Sigmoid colon (tissue), 7 donors: ENCODE measurements at regions of chr12 and their contacts with region 1.

Region 1: GRCh38 chr12:10140001-10140400 is 10.0 kb upstream of the CLEC7A start:
- DNase-seq: no peak
- H3K4me3 ChIP-seq: no peak overlapping the region
- H3K27ac ChIP-seq: no peak overlapping the region
- H3K4me1 ChIP-seq: peaks cover 0 to 13% (median 5%) of the 10 kb centered on the region in 4 donors
- H3K27me3 ChIP-seq: no peaks in the 10 kb centered on the region
- CTCF ChIP-seq: peak in 3 of 4 experiments; percentile 29 to 31 (median 30)
- EP300 ChIP-seq: no peak
- POLR2A ChIP-seq: no peak

Region 2: DNA sequence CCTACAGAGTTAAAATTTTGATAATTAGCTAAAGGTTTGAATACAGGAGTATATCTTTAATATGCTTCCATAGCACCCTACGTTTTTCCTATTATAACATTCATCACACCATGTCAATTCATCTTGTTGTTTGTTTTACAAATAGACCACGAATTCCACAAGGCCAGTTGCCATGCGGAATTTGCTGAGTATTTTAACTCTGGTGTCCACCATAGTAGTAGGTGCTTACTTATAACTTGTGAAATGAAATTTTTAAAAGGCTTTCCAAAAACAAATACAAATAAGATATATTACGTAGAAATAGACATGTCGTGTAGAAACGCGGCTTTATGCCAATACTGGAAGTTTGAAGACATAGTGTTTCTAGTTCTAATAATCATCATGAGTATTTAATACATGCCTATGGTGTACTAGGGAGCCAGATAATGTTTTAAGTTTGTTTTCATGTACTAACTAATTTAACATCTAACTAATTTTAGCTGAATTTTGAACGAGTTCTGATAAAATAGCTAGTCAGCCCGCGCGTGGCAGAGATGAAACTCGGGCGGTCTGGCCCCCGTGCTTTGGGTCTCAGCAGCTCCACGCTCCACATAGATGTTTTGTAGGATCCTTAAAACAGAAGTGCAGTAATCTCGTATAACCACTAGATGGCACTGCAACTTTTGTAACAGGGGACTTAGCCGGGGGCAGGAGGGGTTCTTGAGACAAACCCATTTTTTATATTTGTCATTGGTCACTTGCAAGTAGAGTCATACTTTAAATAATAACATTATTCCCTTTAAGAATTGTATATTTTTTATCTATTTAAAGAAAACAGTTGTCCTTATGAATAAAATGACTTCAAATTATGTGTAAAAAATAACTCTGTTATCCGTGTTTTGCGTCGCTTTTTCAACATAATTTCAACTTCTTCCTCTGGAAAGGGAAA is 389.5 kb before region 1 on chr12:
- intact Hi-C with region 1: loop called (anchors 5 kb)
- DNase-seq: peak; percentile 69
- H3K4me3 ChIP-seq: peak overlapping the region in 1 of 4 donors; percentile 14
- H3K27ac ChIP-seq: no peak overlapping the region
- H3K4me1 ChIP-seq: peaks cover 0 to 9% (median 0%) of the 10 kb centered on the region in 4 donors
- H3K27me3 ChIP-seq: no peaks in the 10 kb centered on the region
- CTCF ChIP-seq: peak; percentile 21 to 85 (median 64)
- EP300 ChIP-seq: no peak
- POLR2A ChIP-seq: no peak

Region 3: DNA sequence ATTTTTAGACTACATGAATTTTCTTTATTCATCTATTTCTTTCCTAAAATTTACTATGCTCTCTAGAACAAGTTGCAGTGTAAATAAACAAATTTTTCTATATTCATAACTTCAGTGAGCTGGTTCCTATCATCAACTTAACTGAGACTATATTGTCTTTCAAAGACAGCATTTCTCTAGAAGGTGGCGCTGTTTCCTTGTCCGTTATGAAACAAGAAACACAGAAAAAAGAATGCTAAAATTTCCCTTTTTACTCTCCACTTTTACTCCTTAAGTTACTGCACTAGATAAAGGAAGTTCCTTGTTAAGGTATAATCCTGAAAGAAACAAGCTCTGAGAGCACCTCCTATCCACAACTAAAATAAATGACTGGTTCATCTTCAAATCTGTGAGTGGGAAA is 199.6 kb before region 1 on chr12:
- intact Hi-C with region 1: no loop called
- DNase-seq: no peak
- H3K4me3 ChIP-seq: no peak overlapping the region
- H3K27ac ChIP-seq: no peak overlapping the region
- H3K4me1 ChIP-seq: no peaks in the 10 kb centered on the region
- H3K27me3 ChIP-seq: no peaks in the 10 kb centered on the region
- CTCF ChIP-seq: no peak
- EP300 ChIP-seq: no peak
- POLR2A ChIP-seq: no peak

Region 4: GRCh38 chr12:10033783-10034545 is 106.0 kb before region 1 on chr12:
- intact Hi-C with region 1: loop called (anchors 5 kb)
- DNase-seq: no peak
- H3K4me3 ChIP-seq: no peak overlapping the region
- H3K27ac ChIP-seq: no peak overlapping the region
- H3K4me1 ChIP-seq: no peaks in the 10 kb centered on the region
- H3K27me3 ChIP-seq: no peaks in the 10 kb centered on the region
- CTCF ChIP-seq: peak; percentile 32 to 53 (median 44)
- EP300 ChIP-seq: no peak
- POLR2A ChIP-seq: no peak

Region 5: GRCh38 chr12:10075451-10075850 is 64.5 kb before region 1 on chr12:
- intact Hi-C with region 1: loop called (anchors 2 kb)
- DNase-seq: no peak
- H3K4me3 ChIP-seq: no peak overlapping the region
- H3K27ac ChIP-seq: no peak overlapping the region
- H3K4me1 ChIP-seq: no peaks in the 10 kb centered on the region
- H3K27me3 ChIP-seq: no peaks in the 10 kb centered on the region
- CTCF ChIP-seq: no peak
- EP300 ChIP-seq: no peak
- POLR2A ChIP-seq: no peak